ENCODE measurements at regions of chr3 and their contacts with region 1.

Region 1: DNA sequence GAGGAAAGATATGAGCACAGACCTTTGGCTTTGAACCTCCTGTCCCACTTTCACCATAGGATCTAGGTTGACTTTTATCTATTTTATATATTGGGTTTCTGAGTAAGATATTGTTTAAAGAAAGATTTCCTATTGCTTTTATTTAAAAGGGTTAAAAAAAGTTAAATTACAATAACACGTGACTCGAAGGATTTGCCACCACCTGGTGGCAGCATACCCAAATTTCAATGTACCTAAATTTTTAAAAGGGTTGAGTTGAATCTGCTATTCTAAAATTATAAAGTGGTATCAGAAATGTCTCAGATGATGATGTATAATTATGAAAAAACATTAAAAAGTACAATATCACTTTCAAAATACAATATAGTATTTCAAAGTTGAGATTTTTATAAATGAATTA is 368.4 kb downstream of the MECOM start:
- DNase-seq: no peak
- H3K4me3 ChIP-seq: no peak overlapping the region
- CTCF ChIP-seq: no peak

Region 2: DNA sequence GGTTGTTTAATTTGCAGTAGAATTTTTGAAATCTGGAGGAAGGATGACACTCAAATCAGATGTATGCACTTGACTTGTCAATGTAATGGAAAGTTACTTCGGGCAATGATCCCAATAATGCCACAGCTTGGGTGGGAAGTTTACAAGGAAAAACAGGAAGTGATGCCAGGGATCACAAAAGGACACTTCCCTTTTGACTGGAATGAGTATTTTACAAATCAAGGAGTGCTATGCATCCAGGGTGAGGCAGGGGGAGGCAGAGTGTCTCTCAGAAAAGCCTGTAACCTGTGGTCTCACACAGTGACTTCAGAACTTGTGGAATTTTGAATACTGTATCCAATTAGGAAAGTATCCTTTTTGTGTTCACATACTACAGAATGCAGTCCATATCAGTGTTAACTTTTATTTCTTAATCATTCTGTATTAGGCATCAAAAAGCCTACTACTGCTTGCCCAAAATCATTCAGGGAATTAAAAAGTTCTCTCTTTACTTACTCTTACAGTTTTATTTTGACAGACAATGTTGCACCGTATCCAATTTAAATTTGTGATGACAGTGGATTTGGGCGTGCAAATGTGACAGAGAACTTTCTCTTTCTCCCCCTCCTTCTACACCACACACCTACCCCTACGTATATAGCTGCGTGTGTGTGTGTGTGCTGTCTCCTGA is 76.7 kb before region 1 on chr3:
- CTCF ChIA-PET with region 1: interaction called, 15 read pairs
- POLR2A ChIA-PET with region 1: no interaction called
- DNase-seq: no peak
- H3K4me3 ChIP-seq: no peak overlapping the region
- CTCF ChIP-seq: peak; percentile 82

Region 3: DNA sequence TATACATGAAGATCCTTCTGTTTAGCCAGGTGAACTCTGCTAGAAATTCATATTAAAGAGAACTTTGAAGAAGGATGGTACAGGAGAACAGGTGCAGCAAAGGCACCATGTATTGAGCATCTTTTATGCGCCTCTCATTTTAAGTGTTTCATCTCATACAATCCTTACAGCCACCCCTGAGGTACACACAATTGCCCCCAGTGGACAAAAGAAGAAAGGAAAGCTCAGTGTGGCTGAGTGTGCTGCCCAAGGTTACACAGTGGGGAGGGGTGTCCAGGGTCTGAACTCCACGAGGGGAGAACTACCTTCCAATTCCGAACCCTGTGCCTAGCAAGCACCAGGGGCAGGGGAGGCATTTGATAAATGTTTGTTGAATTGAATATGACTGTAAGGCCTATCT is 269.8 kb after region 1 on chr3:
- CTCF ChIA-PET with region 1: no interaction called
- POLR2A ChIA-PET with region 1: no interaction called
- DNase-seq: no peak
- H3K4me3 ChIP-seq: no peak overlapping the region
- CTCF ChIP-seq: no peak